ENCODE measurements at regions of chr2 and their contacts with region 1.

Region 1: DNA sequence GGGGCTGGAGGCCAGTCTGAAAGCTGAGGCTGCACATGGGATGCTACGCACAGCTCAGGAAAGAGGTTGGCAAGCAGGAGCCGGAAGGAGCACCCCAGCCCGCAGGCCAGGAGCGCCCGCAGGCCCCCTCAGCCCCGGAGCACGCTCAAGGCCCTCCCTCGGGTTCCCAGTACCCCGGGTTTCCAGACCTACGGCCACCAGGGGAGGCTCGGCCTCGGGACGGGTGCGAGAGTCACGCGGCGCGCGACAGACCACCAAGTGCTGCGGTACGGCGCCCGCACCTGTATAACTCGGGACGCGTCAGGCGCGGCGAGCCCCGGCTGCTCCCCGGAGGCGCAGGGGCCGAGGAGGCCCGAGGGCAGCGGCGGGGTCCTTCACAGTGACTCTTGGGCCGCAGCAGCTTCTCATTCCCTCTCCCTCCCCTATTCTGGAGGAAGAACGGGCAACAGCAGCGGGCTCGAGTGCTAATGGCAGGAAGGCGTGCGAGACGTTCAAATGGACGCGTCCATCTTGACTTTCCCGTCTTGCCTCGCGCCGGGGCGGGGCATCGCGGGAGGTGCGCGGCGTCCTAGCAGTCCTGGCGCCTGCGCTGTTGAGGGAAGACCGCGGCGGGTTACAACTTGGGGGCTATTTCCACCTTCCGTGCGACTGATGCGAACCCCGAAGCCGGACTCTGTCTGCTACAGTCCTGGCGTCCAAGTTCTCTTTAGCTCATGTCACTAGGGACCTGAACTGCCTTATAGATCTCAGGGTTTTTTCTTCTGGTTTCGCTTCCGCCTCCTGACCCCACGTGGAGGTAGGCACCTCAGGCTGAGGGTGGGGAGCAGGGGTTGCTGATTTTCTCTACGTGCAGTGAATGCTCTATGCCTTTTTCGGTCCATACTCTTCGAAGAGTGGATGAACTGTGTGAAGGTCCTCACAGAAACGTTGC is at the start of gene ANAPC1:
- DNase-seq: peak; percentile 92
- ATAC-seq: peak; percentile 93
- H3K4me3 ChIP-seq: peak within 1 kb of the TSS; percentile 50 to 94 (median 92)
- H3K4me3 Mint-ChIP-seq: peak within 1 kb of the TSS; percentile 95
- H3K27ac ChIP-seq: peak within 1 kb of the TSS; percentile 84 to 93
- H3K27ac Mint-ChIP-seq: peak within 1 kb of the TSS; percentile 98
- H3K4me1 ChIP-seq: peaks cover 10 to 18% of the 10 kb centered on the region in 2 donors
- H3K4me1 Mint-ChIP-seq: peaks cover 12% of the 10 kb centered on the region
- H3K27me3 ChIP-seq: no peaks in the 10 kb centered on the region
- H3K27me3 Mint-ChIP-seq: no peaks in the 10 kb centered on the region
- CTCF ChIP-seq: no peak
- total RNA-seq, gene ANAPC1: 59.4 and 69.3 TPM in 2 replicates

Region 2: GRCh38 chr2:110677530-110678456 is 1206.1 kb before region 1 on chr2 and contains the start of gene BUB1:
- CTCF ChIA-PET with region 1: no interaction called
- POLR2A ChIA-PET with region 1: no interaction called
- intact Hi-C with region 1: loop called (anchors 10 kb)
- DNase-seq: peak; percentile 96
- ATAC-seq: peak; percentile 92
- H3K4me3 ChIP-seq: peak within 1 kb of the TSS; percentile 69 to 98 (median 93)
- H3K4me3 Mint-ChIP-seq: peak within 1 kb of the TSS; percentile 96
- H3K27ac ChIP-seq: peak within 1 kb of the TSS; percentile 77 to 81
- H3K27ac Mint-ChIP-seq: peak within 1 kb of the TSS; percentile 91
- H3K4me1 ChIP-seq: peaks cover 34 to 35% of the 10 kb centered on the region in 2 donors
- H3K4me1 Mint-ChIP-seq: peaks cover 40% of the 10 kb centered on the region
- H3K27me3 ChIP-seq: no peaks in the 10 kb centered on the region
- H3K27me3 Mint-ChIP-seq: no peaks in the 10 kb centered on the region
- CTCF ChIP-seq: no peak
- total RNA-seq, gene BUB1: 1.6 and 2.0 TPM in 2 replicates

Region 3: GRCh38 chr2:112048887-112049286 is 165.0 kb after region 1 on chr2:
- CTCF ChIA-PET with region 1: interaction called, 83 read pairs
- POLR2A ChIA-PET with region 1: no interaction called
- intact Hi-C with region 1: loop called (anchors 1 kb)
- DNase-seq: peak; percentile 68
- ATAC-seq: peak; percentile 82
- H3K4me3 ChIP-seq: no peak overlapping the region
- H3K4me3 Mint-ChIP-seq: no peak overlapping the region
- H3K27ac ChIP-seq: no peak overlapping the region
- H3K27ac Mint-ChIP-seq: no peak overlapping the region
- H3K4me1 ChIP-seq: peaks cover 6 to 7% of the 10 kb centered on the region in 2 donors
- H3K4me1 Mint-ChIP-seq: peaks cover 5% of the 10 kb centered on the region
- H3K27me3 ChIP-seq: peaks cover 0 to 3% (median 0%) of the 10 kb centered on the region in 4 experiments
- H3K27me3 Mint-ChIP-seq: peaks cover 9% of the 10 kb centered on the region
- CTCF ChIP-seq: peak; percentile 89

Region 4: DNA sequence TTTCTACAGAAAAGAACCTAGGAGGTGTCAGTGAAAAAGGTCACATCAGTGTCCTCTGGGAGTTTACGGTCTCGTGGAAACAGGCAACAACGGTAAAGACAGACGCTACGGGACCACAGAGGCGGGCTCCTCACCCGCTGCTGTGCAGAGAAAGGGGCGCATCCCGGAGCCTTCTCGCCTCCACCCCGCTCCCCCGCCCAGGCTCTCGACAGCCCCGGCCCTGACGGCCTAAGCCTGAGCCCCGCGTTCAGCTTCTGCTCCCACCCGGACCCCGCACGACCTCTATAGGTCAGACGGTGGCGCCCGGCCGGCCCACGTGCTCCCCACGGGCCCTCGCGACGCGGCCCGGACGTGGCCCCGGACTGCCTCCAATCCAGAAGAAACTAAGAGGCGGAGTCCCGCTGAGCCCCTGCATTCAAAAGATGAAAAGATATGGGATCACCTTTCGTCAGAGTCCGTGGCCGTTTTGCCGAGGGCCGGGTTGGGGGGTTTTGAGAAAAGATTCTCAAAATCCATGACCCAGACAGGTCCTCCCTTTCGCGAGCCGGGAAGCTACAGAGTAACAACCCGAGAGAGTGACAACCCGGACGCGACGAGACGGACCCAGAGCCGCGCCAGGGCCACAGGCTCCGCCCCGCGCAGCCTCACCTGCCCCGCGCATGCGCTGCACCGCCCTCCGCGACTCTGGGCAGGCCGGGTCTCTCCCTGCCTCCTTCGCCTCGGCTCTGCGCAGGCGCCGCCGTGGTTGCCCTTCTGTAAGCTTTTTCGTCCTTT is 370.7 kb after region 1 on chr2 and contains the start of gene ZC3H8:
- CTCF ChIA-PET with region 1: no interaction called
- POLR2A ChIA-PET with region 1: no interaction called
- intact Hi-C with region 1: loop called (anchors 5 kb)
- DNase-seq: peak; percentile 95
- ATAC-seq: peak; percentile 89
- H3K4me3 ChIP-seq: peak within 1 kb of the TSS; percentile 72 to 84 (median 79)
- H3K4me3 Mint-ChIP-seq: peak within 1 kb of the TSS; percentile 93
- H3K27ac ChIP-seq: peak within 1 kb of the TSS; percentile 83 to 93
- H3K27ac Mint-ChIP-seq: peak within 1 kb of the TSS; percentile 92
- H3K4me1 ChIP-seq: peaks cover 9 to 17% of the 10 kb centered on the region in 2 donors
- H3K4me1 Mint-ChIP-seq: peaks cover 23% of the 10 kb centered on the region
- H3K27me3 ChIP-seq: no peaks in the 10 kb centered on the region
- H3K27me3 Mint-ChIP-seq: no peaks in the 10 kb centered on the region
- CTCF ChIP-seq: no peak
- total RNA-seq, gene ZC3H8: 26.0 and 27.2 TPM in 2 replicates

Measured in B cell (primary cell).